H1 (cell line): ENCODE measurements at regions of chr14 and their contacts with region 1.

Region 1: DNA sequence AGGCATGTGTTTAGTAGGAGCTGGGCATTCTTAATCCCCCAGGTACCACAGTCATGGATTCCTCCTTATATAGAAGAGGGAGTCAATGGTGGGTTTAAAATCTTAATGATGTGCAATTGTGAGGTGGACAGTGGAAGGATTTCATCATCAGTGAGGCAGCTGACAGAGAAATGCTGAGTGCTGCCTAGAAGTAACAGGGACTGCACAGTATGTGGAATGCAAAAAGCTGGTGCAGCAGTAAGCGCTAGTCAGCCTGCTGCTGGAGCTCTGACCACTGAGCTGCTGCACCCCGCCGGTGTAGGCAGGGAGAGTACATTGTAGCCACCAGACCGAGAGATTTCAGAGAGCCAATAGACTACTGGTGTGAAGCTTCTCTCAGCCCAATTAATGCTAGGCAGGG is 80.5 kb upstream of the DACT1 start:
- DNase-seq: no peak
- H3K4me3 ChIP-seq: no peak overlapping the region
- H3K27ac ChIP-seq: no peak overlapping the region
- H3K4me1 ChIP-seq: 0 out of 7 replicates have a peak, but pooled peaks cover 0 to 2% (median 0%) of the 10 kb centered on the region in 4 experiments
- H3K27me3 ChIP-seq: no peaks in the 10 kb centered on the region
- CTCF ChIP-seq: no peak
- EP300 ChIP-seq: no peak
- POLR2A ChIP-seq: no peak
- RAD21 ChIP-seq: no peak

Region 2: GRCh38 chr14:58568322-58568721 is 11.1 kb after region 1 on chr14:
- CTCF ChIA-PET with region 1: interaction called, 13 read pairs
- POLR2A ChIA-PET with region 1: no interaction called
- DNase-seq: no peak
- H3K4me3 ChIP-seq: no peak overlapping the region
- H3K27ac ChIP-seq: no peak overlapping the region
- H3K4me1 ChIP-seq: no peaks in the 10 kb centered on the region
- H3K27me3 ChIP-seq: no peaks in the 10 kb centered on the region
- CTCF ChIP-seq: no peak
- EP300 ChIP-seq: no peak
- POLR2A ChIP-seq: no peak
- RAD21 ChIP-seq: no peak